CD8-positive, alpha-beta memory T cell (primary cell): ENCODE measurements at regions of chr1 and their contacts with region 1.

Region 1: DNA sequence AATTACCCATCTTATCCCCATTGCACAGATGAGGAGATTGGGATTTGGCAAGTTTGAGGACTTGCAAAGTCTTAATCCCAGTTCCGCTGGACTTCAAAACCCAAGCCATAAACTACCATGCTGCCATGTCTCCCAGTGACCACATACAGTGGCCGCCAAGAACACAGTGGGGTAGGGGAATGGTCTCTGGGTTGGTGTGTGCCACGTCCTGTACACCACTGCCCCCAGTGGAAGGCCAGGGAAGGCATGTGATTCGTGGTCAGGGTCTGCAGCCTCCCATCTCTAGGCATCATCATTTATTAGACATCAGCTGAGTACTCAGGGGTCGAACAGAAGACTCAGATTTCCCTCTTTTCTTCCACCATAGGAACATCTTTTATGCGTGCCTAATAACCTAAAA is 76.0 kb downstream of the MAN1C1 start:
- DNase-seq: no peak
- H3K4me3 ChIP-seq: no peak overlapping the region
- H3K4me3 Mint-ChIP-seq: no peak overlapping the region
- H3K27ac ChIP-seq: no peak overlapping the region
- H3K27ac Mint-ChIP-seq: no peak overlapping the region
- H3K4me1 ChIP-seq: peaks cover 26% of the 10 kb centered on the region
- H3K4me1 Mint-ChIP-seq: peaks cover 2 to 26% (median 8%) of the 10 kb centered on the region in 3 donors
- H3K27me3 ChIP-seq: no peaks in the 10 kb centered on the region
- H3K27me3 Mint-ChIP-seq: no peaks in the 10 kb centered on the region

Region 2: DNA sequence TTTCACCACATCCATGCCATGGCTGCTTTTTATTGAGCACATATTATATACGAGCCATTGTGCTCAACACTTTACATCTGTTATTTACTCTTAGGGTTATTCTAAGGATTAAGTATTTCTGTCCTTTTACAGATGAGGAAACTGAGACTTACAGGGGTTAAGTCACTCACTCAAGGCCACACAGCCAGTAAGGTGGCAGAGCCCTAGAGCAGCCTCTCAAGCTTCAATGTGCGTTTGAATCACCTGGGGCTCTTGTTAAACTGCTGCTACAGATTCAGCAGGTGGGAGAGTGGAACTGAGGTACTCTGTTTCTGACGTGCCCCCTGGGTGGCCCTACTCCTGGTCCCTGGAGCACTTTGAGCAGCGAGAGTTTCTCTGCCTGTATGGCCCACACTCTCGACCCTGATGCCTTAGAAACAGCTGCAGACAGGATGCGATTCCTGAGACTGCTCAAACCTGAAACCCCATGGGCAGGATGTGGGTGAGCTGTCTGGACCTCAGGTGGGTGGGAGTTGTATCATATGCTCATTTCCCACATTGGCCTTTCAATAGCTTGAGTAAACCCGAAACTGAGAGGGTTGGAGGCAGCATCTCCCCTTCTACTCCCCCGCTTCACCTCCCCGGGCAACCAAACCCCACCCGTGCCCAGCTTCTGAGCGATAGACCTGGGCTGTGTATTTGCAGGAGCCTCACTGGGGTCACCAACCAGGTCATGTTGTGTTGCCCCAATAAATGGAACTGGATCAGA is 16.7 kb before region 1 on chr1:
- CTCF ChIA-PET with region 1: interaction called, 10 read pairs
- POLR2A ChIA-PET with region 1: no interaction called
- DNase-seq: peak; percentile 50 to 91 (median 80)
- H3K4me3 ChIP-seq: peak overlapping the region; percentile 50
- H3K4me3 Mint-ChIP-seq: peak overlapping the region; percentile 58 to 89 (median 82)
- H3K27ac ChIP-seq: no peak overlapping the region
- H3K27ac Mint-ChIP-seq: peak overlapping the region; percentile 55 to 96 (median 85)
- H3K4me1 ChIP-seq: peaks cover 76% of the 10 kb centered on the region
- H3K4me1 Mint-ChIP-seq: peaks cover 62 to 80% (median 69%) of the 10 kb centered on the region in 3 donors
- H3K27me3 ChIP-seq: no peaks in the 10 kb centered on the region
- H3K27me3 Mint-ChIP-seq: peaks cover 0 to 1% of the 10 kb centered on the region in 2 donors